ENCODE measurements at regions of chr6 and their contacts with region 1.

Region 1: DNA sequence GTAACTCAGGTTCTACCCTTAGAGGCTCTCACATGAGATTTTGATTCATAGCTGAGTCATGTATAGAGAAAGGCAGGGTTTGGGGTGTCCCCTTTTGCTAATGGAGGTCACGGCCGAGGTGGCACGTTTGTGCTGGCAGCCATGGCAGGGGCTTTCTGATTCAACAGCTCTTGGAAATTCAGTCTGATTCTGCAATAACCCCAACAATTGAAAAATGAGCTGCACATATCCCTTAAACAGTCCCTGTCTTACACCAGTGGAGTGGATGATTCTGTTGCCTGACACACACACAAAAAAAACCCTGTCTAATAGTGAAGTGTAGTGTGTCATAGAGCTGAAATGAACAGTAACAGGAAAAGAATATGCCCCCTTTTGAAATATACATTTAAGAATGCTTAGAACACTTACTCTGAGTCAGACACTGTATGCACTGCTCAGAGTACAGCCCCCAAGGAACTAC is 40.4 kb upstream of the ARG1 start:
- DNase-seq: no peak
- H3K4me3 Mint-ChIP-seq: no peak overlapping the region
- H3K27ac Mint-ChIP-seq: peak overlapping the region; percentile 16
- H3K4me1 Mint-ChIP-seq: peaks cover 51% of the 10 kb centered on the region
- H3K27me3 Mint-ChIP-seq: no peaks in the 10 kb centered on the region

Region 2: DNA sequence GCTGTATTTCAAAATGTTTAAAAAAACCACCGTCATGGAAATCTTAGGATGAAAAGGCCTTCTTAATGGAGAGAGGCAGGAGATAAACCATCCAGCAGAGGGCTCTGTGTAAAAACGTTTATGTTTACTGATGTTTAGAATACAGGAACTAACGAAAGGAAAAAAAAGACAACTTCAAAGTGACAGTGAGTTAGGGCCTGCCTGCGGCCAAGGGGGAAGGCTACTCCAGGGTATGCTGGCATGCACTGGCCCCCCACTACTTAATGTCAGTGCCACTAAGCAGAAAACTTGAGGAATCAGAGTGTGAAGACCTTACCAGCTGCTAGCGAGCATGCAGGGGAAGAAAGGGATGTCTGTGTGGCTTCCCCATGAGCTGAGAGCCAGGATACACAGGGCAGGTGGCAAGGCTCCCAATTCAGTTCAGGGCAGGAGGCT is 349.6 kb before region 1 on chr6:
- CTCF ChIA-PET with region 1: interaction called, 19 read pairs
- POLR2A ChIA-PET with region 1: no interaction called
- DNase-seq: peak; percentile 58
- H3K4me3 Mint-ChIP-seq: peak overlapping the region; percentile 5
- H3K27ac Mint-ChIP-seq: peak overlapping the region; percentile 97
- H3K4me1 Mint-ChIP-seq: peaks cover 13% of the 10 kb centered on the region
- H3K27me3 Mint-ChIP-seq: no peaks in the 10 kb centered on the region

Region 3: GRCh38 chr6:131199568-131200272 is 332.9 kb before region 1 on chr6:
- CTCF ChIA-PET with region 1: interaction called, 27 read pairs
- POLR2A ChIA-PET with region 1: interaction called, 4 read pairs
- DNase-seq: peak; percentile 85
- H3K4me3 Mint-ChIP-seq: peak overlapping the region; percentile 79
- H3K27ac Mint-ChIP-seq: peak overlapping the region; percentile 99
- H3K4me1 Mint-ChIP-seq: peaks cover 62% of the 10 kb centered on the region
- H3K27me3 Mint-ChIP-seq: no peaks in the 10 kb centered on the region

Region 4: DNA sequence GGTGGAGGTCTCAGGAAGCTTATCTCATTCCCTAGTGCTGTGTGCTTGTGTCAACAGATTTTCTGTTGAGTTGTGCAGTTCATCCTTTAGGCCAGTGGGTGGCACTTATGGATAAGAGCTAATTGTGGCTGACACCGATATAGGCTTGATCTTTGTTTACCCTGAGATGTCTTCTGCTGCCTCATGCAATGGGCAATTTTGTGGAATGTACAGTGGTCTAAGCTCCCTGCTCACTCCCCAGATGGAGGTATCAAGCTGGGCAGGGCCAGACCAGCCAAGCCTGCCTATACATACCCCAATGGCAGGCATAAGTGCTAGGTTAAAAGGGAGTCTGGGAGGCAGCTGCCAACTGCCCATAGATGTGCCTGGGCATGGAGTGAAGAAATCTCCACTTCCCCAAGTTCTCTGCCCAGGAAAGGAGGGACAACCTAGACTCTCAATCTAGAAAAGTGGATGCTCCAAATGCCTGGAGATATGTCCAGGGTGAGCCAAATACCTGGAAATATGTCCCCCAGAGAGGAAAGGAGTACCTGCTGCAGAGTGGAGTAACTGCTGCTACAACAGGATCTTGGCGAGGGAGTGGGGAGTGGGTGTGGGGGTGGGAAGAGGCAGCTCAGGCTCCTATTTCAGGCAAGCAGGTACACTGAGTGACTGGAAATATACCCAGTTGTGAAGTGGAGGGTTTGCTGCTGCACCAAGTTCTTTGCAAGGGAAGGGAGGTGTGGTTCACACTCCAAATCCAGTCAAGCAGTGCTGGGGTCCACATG is 12.8 kb before region 1 on chr6:
- CTCF ChIA-PET with region 1: interaction called, 12 read pairs
- POLR2A ChIA-PET with region 1: no interaction called
- DNase-seq: peak; percentile 56
- H3K4me3 Mint-ChIP-seq: no peak overlapping the region
- H3K27ac Mint-ChIP-seq: no peak overlapping the region
- H3K4me1 Mint-ChIP-seq: peaks cover 15% of the 10 kb centered on the region
- H3K27me3 Mint-ChIP-seq: peaks cover 2% of the 10 kb centered on the region